ENCODE measurements at regions of chr2 and their contacts with region 1.

Region 1: GRCh38 chr2:65186872-65187851 is 40.5 kb upstream of the ACTR2 start:
- DNase-seq: peak; percentile 75
- ATAC-seq: peak; percentile 90
- H3K4me3 Mint-ChIP-seq: no peak overlapping the region
- H3K27ac Mint-ChIP-seq: no peak overlapping the region
- H3K4me1 Mint-ChIP-seq: peaks cover 4% of the 10 kb centered on the region
- H3K27me3 Mint-ChIP-seq: no peaks in the 10 kb centered on the region
- CTCF ChIP-seq: peak; percentile 74

Region 2: DNA sequence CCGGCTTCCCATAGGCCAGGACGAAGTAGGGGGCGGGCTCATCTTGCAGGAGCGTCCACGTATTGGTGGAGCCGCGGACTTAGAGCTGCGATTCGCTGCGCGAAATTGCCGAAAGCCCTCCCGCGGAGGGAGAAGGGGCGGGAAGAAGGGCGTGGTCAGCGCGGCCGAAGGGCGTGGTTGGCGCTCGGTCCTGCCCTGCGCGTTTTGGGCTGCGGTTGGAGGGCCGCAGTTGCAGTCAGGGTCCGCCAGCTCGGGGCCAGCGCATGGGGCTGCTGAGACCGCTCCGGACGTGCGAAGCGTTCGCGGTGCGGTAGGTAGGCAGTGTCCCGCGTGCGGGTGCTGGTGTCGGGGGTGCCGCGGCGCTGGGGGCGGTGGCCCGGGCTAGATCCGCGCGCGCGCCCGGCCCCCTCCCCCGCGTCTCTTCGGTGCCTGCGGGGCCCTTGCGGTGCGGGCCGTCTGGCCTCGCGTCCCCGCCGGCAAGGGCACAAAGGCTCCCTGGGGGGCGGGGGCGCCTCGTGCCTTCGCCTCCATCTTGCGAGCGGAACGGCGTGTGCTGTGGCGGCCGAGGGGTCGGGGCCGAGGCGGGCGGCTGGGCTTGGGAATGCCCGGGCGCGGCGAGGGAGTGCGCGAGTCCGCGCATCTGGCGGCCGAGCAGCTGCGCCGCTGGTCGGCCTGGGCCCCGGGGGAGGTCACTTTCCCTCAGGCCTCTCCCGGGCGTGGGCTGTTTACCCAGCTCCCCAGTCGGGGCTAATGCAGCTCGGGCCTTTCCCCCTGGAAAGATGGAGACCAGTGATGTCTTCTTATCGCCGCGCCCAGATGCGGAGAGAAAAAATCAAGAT is 130.7 kb before region 1 on chr2 and contains the start of gene CEP68:
- CTCF ChIA-PET with region 1: interaction called, 13 read pairs
- POLR2A ChIA-PET with region 1: no interaction called
- intact Hi-C with region 1: no loop called
- DNase-seq: peak; percentile 98
- ATAC-seq: peak; percentile 94
- H3K4me3 Mint-ChIP-seq: peak within 1 kb of the TSS; percentile 92
- H3K27ac Mint-ChIP-seq: peak within 1 kb of the TSS; percentile 84
- H3K4me1 Mint-ChIP-seq: peaks cover 49% of the 10 kb centered on the region
- H3K27me3 Mint-ChIP-seq: no peaks in the 10 kb centered on the region
- CTCF ChIP-seq: no peak
- total RNA-seq, gene CEP68: 6.0 to 6.3 TPM

Region 3: DNA sequence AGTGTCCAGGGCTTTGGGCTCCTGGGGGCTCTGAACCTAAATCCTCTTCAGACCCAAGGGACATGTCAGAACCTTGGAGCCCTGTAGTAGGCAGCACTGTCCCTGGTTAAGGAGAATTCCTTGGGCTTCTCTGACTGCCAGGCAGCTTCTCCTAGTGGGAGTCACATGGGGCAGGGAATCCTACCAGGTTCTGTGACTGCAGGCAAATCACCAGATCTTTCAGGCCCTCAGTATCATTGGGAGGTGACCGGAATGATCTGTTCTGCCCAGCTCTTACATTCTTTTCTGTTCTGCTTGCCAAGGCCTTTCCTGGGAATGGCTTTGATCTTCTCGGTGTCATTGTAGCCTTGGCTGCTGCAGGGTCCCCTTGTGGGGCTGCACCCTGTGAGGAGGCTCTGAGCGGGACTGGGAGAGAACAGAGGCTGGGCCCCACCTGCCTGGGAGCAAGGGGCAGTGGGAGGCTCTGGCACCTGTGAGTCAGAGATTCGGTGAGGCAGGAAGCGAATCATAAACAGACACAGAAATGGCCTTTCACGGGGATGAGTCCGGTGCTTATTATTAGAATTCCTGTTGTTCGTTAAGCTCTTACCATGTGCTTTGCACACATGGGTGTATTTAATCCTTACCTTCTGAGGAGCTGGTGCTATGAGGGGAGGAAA is 116.9 kb before region 1 on chr2:
- CTCF ChIA-PET with region 1: interaction called, 35 read pairs
- POLR2A ChIA-PET with region 1: no interaction called
- intact Hi-C with region 1: no loop called
- DNase-seq: peak; percentile 48
- ATAC-seq: peak; percentile 60
- H3K4me3 Mint-ChIP-seq: no peak overlapping the region
- H3K27ac Mint-ChIP-seq: peak overlapping the region; percentile 89
- H3K4me1 Mint-ChIP-seq: peaks cover 34% of the 10 kb centered on the region
- H3K27me3 Mint-ChIP-seq: no peaks in the 10 kb centered on the region
- CTCF ChIP-seq: no peak

Region 4: GRCh38 chr2:65136253-65136652 is 50.9 kb before region 1 on chr2:
- CTCF ChIA-PET with region 1: no interaction called
- POLR2A ChIA-PET with region 1: no interaction called
- intact Hi-C with region 1: no loop called
- DNase-seq: no peak
- ATAC-seq: no peak
- H3K4me3 Mint-ChIP-seq: no peak overlapping the region
- H3K27ac Mint-ChIP-seq: no peak overlapping the region
- H3K4me1 Mint-ChIP-seq: peaks cover 1% of the 10 kb centered on the region
- H3K27me3 Mint-ChIP-seq: no peaks in the 10 kb centered on the region
- CTCF ChIP-seq: no peak